Gastrocnemius medialis (tissue), 4 donors: ENCODE measurements at regions of chr10 and their contacts with region 1.

Region 1: DNA sequence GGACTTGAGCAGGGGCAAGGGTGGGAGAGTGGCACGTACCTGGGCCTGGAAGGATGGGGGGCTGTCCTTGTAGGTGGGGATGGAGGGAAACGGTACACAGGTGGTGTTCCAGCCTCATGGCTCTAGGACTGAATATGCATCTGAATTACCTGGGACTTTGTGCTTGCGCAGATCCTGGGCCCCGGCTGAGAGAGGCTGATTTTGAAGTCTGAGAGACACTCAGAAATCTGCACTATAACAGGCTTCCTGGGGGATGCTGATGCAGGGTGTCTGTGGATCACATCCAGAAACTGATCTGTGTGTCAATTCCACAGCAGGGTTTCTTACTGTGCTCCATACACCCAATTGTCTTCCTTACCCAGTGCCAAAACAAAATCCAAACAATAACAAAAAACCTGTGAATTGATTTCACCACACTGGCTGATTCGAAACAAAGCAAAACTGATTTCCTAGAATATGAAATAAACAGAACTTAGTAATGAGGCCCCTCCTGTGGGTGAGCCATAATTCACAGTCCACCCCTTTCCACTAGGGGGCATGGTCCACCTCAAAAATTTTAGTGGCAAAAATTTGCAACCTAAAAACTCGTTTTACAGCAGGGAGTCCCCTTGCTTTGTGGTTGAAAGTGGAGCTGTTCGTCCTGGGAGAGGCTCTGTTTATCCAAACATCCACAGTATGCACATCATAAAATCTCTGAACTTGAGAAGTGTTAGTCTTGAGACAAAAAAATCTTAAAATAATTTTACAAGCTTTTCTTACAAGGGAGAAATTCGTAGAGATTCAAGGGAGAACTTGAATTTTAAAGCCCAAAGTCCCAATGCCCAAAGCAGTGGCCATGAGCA is 32.0 kb upstream of the PLEKHA1 start:
- DNase-seq: no peak
- ATAC-seq: peak; percentile 37 to 44
- H3K4me3 ChIP-seq: no peak overlapping the region
- H3K27ac ChIP-seq: no peak overlapping the region
- H3K4me1 ChIP-seq: peaks cover 0 to 8% of the 10 kb centered on the region in 2 donors
- H3K27me3 ChIP-seq: no peaks in the 10 kb centered on the region
- CTCF ChIP-seq: peak; percentile 51 to 78 (median 73)
- POLR2A ChIP-seq: no peak

Region 2: DNA sequence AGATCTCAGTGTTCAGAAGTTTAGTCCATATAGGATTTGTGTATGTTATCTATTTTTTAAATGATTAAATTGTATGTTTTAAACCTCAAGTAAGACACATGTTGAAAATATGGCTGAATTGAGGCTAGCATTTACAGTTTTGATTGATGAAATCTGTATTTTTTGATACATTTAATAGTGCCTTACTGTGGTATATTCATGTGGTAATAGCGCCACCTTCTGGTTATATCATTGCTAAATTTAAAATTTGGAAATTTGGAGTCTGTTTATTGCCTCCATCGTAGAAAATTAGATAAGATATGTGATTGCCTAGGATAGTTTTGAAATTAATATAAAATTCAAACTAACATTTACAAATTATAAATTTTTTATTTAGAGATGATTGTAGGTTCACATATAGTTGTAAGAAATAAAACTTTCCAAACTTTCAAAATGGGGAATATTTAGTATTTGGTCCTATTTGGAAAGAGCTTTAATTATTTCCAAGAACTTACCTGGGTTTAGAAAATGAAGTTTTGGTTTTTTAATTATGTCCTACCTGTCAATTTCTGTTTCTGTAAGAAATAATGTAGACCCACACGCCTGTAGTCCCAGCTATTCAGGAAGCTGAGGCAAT is 92.8 kb after region 1 on chr10:
- in situ Hi-C with region 1: loop called (anchors 5 to 10 kb)
- intact Hi-C with region 1: loop called (anchors 1 kb)
- DNase-seq: no peak
- ATAC-seq: no peak
- H3K4me3 ChIP-seq: no peak overlapping the region
- H3K27ac ChIP-seq: no peak overlapping the region
- H3K4me1 ChIP-seq: no peaks in the 10 kb centered on the region
- H3K27me3 ChIP-seq: no peaks in the 10 kb centered on the region
- CTCF ChIP-seq: peak; percentile 64 to 87 (median 66)
- POLR2A ChIP-seq: no peak

Region 3: GRCh38 chr10:122446668-122447423 is 104.3 kb after region 1 on chr10:
- in situ Hi-C with region 1: no loop called
- intact Hi-C with region 1: no loop called
- DNase-seq: no peak
- ATAC-seq: peak in 1 of 2 donors; percentile 39
- H3K4me3 ChIP-seq: no peak overlapping the region
- H3K27ac ChIP-seq: no peak overlapping the region
- H3K4me1 ChIP-seq: peaks cover 25 to 27% of the 10 kb centered on the region in 2 donors
- H3K27me3 ChIP-seq: no peaks in the 10 kb centered on the region
- CTCF ChIP-seq: no peak
- POLR2A ChIP-seq: no peak